CD8-positive, alpha-beta memory T cell (primary cell): ENCODE measurements at regions of chr4 and their contacts with region 1.

Region 1: GRCh38 chr4:77618383-77619122 is 12.9 kb downstream of the CXCL13 start:
- DNase-seq: peak; percentile 25 to 66 (median 35)
- H3K4me3 ChIP-seq: no peak overlapping the region
- H3K4me3 Mint-ChIP-seq: no peak overlapping the region
- H3K27ac ChIP-seq: no peak overlapping the region
- H3K27ac Mint-ChIP-seq: peak overlapping the region in 1 of 8 donors; percentile 44
- H3K4me1 ChIP-seq: no peaks in the 10 kb centered on the region
- H3K4me1 Mint-ChIP-seq: peaks cover 4 to 14% (median 12%) of the 10 kb centered on the region in 3 donors
- H3K27me3 ChIP-seq: no peaks in the 10 kb centered on the region
- H3K27me3 Mint-ChIP-seq: peaks cover 2 to 9% of the 10 kb centered on the region in 2 donors

Region 2: DNA sequence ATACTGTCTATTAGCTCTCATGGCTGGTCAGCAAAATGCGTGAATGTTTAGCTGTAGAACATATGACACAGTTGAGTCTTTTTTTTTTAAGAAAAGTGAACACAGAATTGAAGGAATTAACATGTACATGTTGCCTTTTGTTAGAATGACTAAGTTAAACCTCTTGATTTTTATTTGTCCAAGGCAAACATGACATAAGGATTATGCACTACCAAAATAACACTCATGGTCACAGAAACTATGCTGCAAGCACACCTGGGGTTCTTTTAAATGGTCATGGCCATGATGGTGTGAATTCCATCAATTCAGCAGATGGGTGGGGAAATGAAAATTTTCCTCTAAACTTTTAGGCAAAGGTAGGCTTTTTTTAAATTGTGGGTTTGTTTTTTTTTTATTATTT is 93.0 kb before region 1 on chr4:
- CTCF ChIA-PET with region 1: no interaction called
- POLR2A ChIA-PET with region 1: no interaction called
- DNase-seq: no peak
- H3K4me3 ChIP-seq: no peak overlapping the region
- H3K4me3 Mint-ChIP-seq: no peak overlapping the region
- H3K27ac ChIP-seq: no peak overlapping the region
- H3K27ac Mint-ChIP-seq: no peak overlapping the region
- H3K4me1 ChIP-seq: no peaks in the 10 kb centered on the region
- H3K4me1 Mint-ChIP-seq: no peaks in the 10 kb centered on the region
- H3K27me3 ChIP-seq: no peaks in the 10 kb centered on the region
- H3K27me3 Mint-ChIP-seq: peaks cover 15 to 34% of the 10 kb centered on the region in 2 donors

Region 3: DNA sequence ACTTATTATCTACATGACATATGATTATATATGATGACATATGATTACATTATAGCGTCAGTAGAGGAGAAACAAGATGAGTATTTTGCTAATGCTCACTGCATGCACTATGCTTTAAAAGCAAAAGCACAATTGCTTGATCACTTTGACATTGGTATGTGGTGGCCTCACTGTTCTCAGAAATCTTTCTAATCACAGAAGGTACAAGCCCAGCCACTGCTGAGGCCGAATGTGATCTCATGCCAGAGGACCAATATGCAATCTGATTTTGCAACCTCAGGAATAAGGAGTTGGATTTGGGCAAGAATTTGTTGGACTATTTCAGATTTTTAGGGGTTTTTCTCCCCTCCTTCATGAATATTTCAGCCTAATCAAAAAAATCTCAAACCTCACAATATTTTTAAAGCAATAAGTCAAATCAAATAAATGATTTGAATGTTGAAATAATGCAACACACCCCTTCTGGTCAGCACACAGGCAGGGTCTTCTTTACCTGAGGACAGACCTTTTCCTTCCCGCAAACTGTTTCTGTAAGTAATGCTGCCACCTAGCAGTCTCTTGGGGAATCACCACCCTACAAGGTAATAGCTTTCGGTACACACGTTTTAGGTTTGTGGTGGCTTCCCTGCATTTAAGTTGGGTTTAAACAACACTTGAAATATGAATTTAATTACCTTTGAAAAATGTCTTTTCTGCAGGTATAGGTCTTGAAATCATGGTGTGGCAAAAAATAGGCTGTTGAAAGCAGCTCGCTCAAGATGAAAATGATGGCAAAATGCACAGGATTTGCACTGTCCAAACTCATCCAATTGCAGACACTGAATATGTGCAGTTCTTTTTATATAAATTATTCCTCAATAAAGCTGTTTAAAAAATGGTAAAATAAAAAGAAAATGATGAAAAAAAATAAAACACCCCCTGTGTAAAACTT is 17.8 kb before region 1 on chr4:
- CTCF ChIA-PET with region 1: interaction called, 25 read pairs
- POLR2A ChIA-PET with region 1: no interaction called
- DNase-seq: peak in 1 of 5 donors; percentile 49
- H3K4me3 ChIP-seq: no peak overlapping the region
- H3K4me3 Mint-ChIP-seq: no peak overlapping the region
- H3K27ac ChIP-seq: no peak overlapping the region
- H3K27ac Mint-ChIP-seq: no peak overlapping the region
- H3K4me1 ChIP-seq: no peaks in the 10 kb centered on the region
- H3K4me1 Mint-ChIP-seq: peaks cover 1 to 20% (median 9%) of the 10 kb centered on the region in 3 donors
- H3K27me3 ChIP-seq: no peaks in the 10 kb centered on the region
- H3K27me3 Mint-ChIP-seq: peaks cover 0 to 2% of the 10 kb centered on the region in 2 donors

Region 4: DNA sequence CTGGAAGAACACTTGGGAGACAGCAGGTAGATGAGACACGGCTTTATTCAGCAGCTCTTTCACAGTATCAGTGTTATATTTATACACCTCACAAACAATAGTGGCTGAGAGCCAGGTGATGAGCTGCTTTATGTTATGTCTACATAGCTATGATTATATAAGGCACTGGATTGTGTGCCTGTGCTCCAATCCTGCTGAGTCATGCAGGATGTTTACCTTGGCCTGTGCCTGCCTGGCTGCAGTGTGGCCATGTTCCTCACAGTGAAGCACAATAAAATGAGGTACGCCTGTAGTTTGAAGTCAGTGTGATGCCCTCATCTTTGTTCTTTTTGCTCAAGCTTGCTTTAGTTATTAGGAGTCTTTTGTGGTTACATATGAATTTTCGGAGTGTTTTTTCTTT is 18.3 kb after region 1 on chr4:
- CTCF ChIA-PET with region 1: no interaction called
- POLR2A ChIA-PET with region 1: no interaction called
- DNase-seq: no peak
- H3K4me3 ChIP-seq: no peak overlapping the region
- H3K4me3 Mint-ChIP-seq: no peak overlapping the region
- H3K27ac ChIP-seq: no peak overlapping the region
- H3K27ac Mint-ChIP-seq: peak overlapping the region in 1 of 8 donors; percentile 9
- H3K4me1 ChIP-seq: no peaks in the 10 kb centered on the region
- H3K4me1 Mint-ChIP-seq: no peaks in the 10 kb centered on the region
- H3K27me3 ChIP-seq: no peaks in the 10 kb centered on the region
- H3K27me3 Mint-ChIP-seq: peaks cover 0 to 2% of the 10 kb centered on the region in 2 donors

Region 5: GRCh38 chr4:77899607-77900006 is 281.1 kb after region 1 on chr4:
- CTCF ChIA-PET with region 1: no interaction called
- POLR2A ChIA-PET with region 1: no interaction called
- DNase-seq: no peak
- H3K4me3 ChIP-seq: no peak overlapping the region
- H3K4me3 Mint-ChIP-seq: peak overlapping the region in 1 of 7 donors; percentile 6
- H3K27ac ChIP-seq: no peak overlapping the region
- H3K27ac Mint-ChIP-seq: peak overlapping the region in 4 of 8 donors; percentile 15 to 61 (median 38)
- H3K4me1 ChIP-seq: peaks cover 9% of the 10 kb centered on the region
- H3K4me1 Mint-ChIP-seq: peaks cover 17 to 34% (median 18%) of the 10 kb centered on the region in 3 donors
- H3K27me3 ChIP-seq: no peaks in the 10 kb centered on the region
- H3K27me3 Mint-ChIP-seq: no peaks in the 10 kb centered on the region